HepG2 (cell line): ENCODE measurements at regions of chr17 and their contacts with region 1.

Region 1: GRCh38 chr17:28710861-28711722 is 596 bp downstream of the PROCA1 start:
- DNase-seq: peak; percentile 86
- ATAC-seq: peak; percentile 91
- H3K4me3 ChIP-seq: peak overlapping the region; percentile 65 to 76 (median 67)
- H3K27ac ChIP-seq: peak overlapping the region; percentile 99
- H3K4me1 ChIP-seq: peaks cover 47% of the 10 kb centered on the region
- H3K27me3 ChIP-seq: peaks cover 0 to 2% of the 10 kb centered on the region in 2 experiments; a peak in 2 of 5 replicates
- CTCF ChIP-seq: no peak
- EP300 ChIP-seq: 0 out of 4 replicates have a peak, but pooled peaks of 1 of the 2 experiments have one; percentile 15
- POLR2A ChIP-seq: peak; percentile 92 to 97
- RAD21 ChIP-seq: peak; percentile 74; the same call in 1 of the 2 replicates

Region 2: DNA sequence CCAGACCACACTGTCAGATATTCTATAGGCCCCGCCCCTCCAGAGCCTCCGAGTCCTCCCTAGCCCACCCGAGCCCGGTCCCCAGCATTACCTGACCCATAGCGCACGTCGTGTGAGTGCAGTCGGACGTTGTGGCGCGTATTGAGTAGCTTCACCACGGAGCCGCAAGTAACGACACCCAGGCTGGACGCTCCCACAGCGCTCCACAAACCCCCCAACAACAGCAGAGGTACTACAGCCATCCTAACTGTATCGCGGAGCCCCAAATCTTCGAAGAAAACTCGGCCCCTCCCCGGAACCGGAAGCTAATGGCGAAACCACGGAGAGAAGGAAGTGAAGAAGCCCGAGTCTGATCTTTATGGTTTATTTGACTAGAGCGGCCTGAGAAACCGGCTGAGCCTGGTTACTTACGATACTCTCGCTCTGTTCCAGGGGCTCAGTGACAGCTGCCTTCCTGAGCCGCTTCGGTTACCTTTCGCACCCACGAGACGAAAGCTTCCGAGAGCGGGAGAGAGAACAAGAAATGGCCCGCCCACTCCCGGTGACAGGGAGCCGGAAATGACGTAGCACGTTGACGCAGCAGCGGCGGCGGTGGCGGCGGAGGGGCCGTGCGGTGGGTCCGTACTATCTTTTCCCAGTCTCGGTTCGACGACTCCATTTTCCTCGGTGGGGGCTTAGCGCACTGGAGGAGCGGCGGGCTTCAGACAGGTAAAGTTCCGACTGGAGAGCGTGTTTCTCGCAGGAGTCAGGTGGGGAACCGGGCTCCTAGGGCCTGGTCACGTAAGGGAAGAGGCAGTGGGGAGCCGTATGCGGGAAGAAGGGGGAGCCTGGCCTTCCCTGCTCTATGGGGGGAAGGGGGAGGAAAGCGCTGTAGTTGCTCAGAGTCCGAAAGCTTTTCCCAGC is 49.2 kb before region 1 on chr17 and contains the starts of genes SDF2 and SUPT6H:
- CTCF ChIA-PET with region 1: no interaction called
- POLR2A ChIA-PET with region 1: interaction called, 24 read pairs
- in situ Hi-C with region 1: no loop called
- intact Hi-C with region 1: no loop called
- DNase-seq: peak; percentile 81
- ATAC-seq: peak; percentile 92
- H3K4me3 ChIP-seq: peak within 1 kb of the TSS; percentile 73 to 91 (median 88)
- H3K27ac ChIP-seq: peak within 1 kb of the TSS; percentile 91
- H3K4me1 ChIP-seq: peaks cover 52% of the 10 kb centered on the region
- H3K27me3 ChIP-seq: no peaks in the 10 kb centered on the region; a peak in 2 of 5 replicates
- CTCF ChIP-seq: no peak
- EP300 ChIP-seq: no peak
- POLR2A ChIP-seq: peak; percentile 73 to 81
- RAD21 ChIP-seq: no peak
- total RNA-seq, gene SDF2: 39.1 and 58.2 TPM in 2 replicates
- total RNA-seq, gene SUPT6H: 39.9 TPM in 2 replicates

Region 3: DNA sequence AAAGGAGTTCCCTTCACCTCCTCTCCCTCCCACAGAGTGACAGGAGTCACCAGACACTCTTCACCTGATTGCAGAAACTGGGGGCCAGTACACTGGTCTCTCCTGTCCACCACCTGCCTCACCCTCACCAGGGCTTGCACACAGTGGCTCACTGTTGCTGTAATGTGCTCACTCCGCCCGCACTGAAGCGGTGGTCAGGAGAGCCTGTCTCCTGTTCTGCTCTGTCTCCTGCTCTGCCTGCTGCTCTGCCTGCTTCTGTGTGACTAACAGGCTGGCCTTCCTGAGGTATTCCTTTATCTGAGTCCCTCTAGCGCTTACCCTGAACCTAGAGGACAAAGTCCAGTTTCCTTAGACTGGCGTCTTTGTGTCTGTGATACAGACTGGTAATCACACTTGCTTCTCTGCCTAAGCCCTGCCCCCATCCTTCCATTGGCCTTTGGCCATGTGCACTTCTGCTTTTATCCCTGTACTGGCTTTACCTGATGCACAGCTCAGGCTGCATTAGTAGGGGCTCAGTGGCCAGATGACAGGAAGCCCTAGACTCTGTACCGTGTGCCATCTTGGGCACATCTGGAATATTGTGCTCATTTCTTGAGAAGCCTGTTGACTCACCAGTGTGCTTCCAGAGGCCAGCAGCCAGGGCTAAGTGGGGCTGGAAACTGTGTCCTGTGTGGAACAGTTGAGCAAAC is 12.7 kb before region 1 on chr17:
- CTCF ChIA-PET with region 1: no interaction called
- POLR2A ChIA-PET with region 1: interaction called, 145 read pairs
- in situ Hi-C with region 1: no loop called
- intact Hi-C with region 1: no loop called
- DNase-seq: peak; percentile 100
- ATAC-seq: peak; percentile 95
- H3K4me3 ChIP-seq: peak overlapping the region in 1 of 3 experiments; percentile 20; a peak in 1 of 6 replicates
- H3K27ac ChIP-seq: peak overlapping the region; percentile 91
- H3K4me1 ChIP-seq: peaks cover 72% of the 10 kb centered on the region
- H3K27me3 ChIP-seq: no peaks in the 10 kb centered on the region
- CTCF ChIP-seq: peak; percentile 46
- EP300 ChIP-seq: peak; percentile 86 to 87; a peak in 3 of 4 replicates
- POLR2A ChIP-seq: peak; percentile 96 to 99
- RAD21 ChIP-seq: peak; percentile 46

Region 4: GRCh38 chr17:28743225-28744103 is 32.4 kb after region 1 on chr17 and contains the start of gene TRAF4:
- CTCF ChIA-PET with region 1: no interaction called
- POLR2A ChIA-PET with region 1: interaction called, 30 read pairs
- in situ Hi-C with region 1: no loop called
- intact Hi-C with region 1: no loop called
- DNase-seq: peak; percentile 73
- ATAC-seq: peak; percentile 64
- H3K4me3 ChIP-seq: peak within 1 kb of the TSS; percentile 72 to 93 (median 74)
- H3K27ac ChIP-seq: peak within 1 kb of the TSS; percentile 95
- H3K4me1 ChIP-seq: peaks cover 49% of the 10 kb centered on the region
- H3K27me3 ChIP-seq: no peaks in the 10 kb centered on the region; a peak in 1 of 5 replicates
- CTCF ChIP-seq: no peak
- EP300 ChIP-seq: no peak
- POLR2A ChIP-seq: peak in 1 of 2 experiments; percentile 92; a peak in 3 of 4 replicates
- RAD21 ChIP-seq: peak; percentile 70
- total RNA-seq, gene TRAF4: 56.6 and 89.9 TPM in 2 replicates

Region 5: GRCh38 chr17:28750178-28751047 is 39.3 kb after region 1 on chr17:
- CTCF ChIA-PET with region 1: interaction called, 3 read pairs
- POLR2A ChIA-PET with region 1: interaction called, 30 read pairs
- in situ Hi-C with region 1: no loop called
- intact Hi-C with region 1: no loop called
- DNase-seq: peak; percentile 88
- ATAC-seq: peak; percentile 66
- H3K4me3 ChIP-seq: no peak overlapping the region
- H3K27ac ChIP-seq: peak overlapping the region; percentile 37
- H3K4me1 ChIP-seq: peaks cover 50% of the 10 kb centered on the region
- H3K27me3 ChIP-seq: no peaks in the 10 kb centered on the region
- CTCF ChIP-seq: peak; percentile 98
- EP300 ChIP-seq: no peak
- POLR2A ChIP-seq: peak in 1 of 2 experiments; percentile 43; a peak in 2 of 4 replicates
- RAD21 ChIP-seq: peak; percentile 95

Region 6: GRCh38 chr17:28760601-28761562 is 49.8 kb after region 1 on chr17:
- CTCF ChIA-PET with region 1: no interaction called
- POLR2A ChIA-PET with region 1: no interaction called
- in situ Hi-C with region 1: no loop called
- intact Hi-C with region 1: no loop called
- DNase-seq: no peak
- ATAC-seq: no peak
- H3K4me3 ChIP-seq: no peak overlapping the region
- H3K27ac ChIP-seq: no peak overlapping the region
- H3K4me1 ChIP-seq: no peaks in the 10 kb centered on the region
- H3K27me3 ChIP-seq: no peaks in the 10 kb centered on the region
- CTCF ChIP-seq: no peak
- EP300 ChIP-seq: no peak
- POLR2A ChIP-seq: no peak
- RAD21 ChIP-seq: no peak